ENCODE measurements at regions of chr12 and their contacts with region 1.

Region 1: GRCh38 chr12:46124848-46125619 is 134.7 kb upstream of the SCAF11 start:
- DNase-seq: peak; percentile 35 to 78 (median 50)
- ATAC-seq: peak; percentile 95
- H3K4me3 ChIP-seq: no peak overlapping the region
- H3K27ac ChIP-seq: no peak overlapping the region
- H3K4me1 ChIP-seq: peaks cover 0 to 10% of the 10 kb centered on the region in 2 experiments; a peak in 3 of 5 replicates
- H3K27me3 ChIP-seq: no peaks in the 10 kb centered on the region; a peak in 1 of 5 replicates
- CTCF ChIP-seq: peak; percentile 60 to 83 (median 65)
- EP300 ChIP-seq: no peak
- POLR2A ChIP-seq: no peak
- RAD21 ChIP-seq: peak; percentile 76 to 83

Region 2: DNA sequence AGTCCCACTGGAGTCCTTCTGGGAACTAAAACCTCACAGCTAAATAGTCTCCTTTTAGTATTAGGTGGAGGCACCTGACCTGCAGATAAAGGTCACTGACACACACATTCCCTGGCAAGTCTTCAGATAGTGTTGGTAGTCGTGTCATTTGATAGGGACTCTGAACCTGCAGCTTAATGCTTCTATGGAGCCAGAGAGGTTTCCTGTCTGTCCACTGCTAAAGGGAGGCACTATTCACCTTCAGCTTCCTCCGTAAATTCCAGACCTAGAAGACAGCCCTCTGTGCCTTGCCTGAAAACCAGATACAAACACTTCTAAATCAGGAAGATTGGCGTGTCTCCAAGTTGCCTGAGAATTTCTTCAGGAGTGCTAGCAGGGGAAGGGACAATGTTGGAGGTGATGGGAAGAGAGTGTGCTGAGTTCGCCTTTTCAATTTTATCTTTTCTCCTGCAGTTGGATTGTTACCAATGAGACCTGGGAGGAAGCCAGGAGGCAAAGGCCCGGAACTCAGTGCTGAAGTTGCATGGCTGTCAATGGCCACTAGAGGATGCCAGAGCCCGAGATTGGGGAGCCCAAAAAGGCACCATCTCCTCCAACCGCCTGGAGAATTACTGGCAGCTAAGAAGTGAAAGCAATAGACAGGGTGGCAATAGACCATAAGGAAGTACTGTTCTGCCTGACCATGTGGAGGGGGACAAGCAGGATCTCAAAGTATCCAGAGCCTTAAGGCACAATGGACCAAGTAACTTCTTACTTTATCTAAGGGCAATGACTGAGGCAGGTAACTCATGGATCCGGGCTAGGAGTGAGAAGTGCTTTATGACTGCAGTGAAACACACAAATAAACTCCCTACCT is 53.0 kb before region 1 on chr12:
- CTCF ChIA-PET with region 1: no interaction called
- POLR2A ChIA-PET with region 1: no interaction called
- in situ Hi-C with region 1: no loop called
- intact Hi-C with region 1: loop called (anchors 2 kb)
- DNase-seq: peak; percentile 52 to 78 (median 62)
- ATAC-seq: peak; percentile 99
- H3K4me3 ChIP-seq: no peak overlapping the region
- H3K27ac ChIP-seq: no peak overlapping the region
- H3K4me1 ChIP-seq: no peaks in the 10 kb centered on the region
- H3K27me3 ChIP-seq: no peaks in the 10 kb centered on the region
- CTCF ChIP-seq: peak; percentile 94 to 97 (median 96)
- EP300 ChIP-seq: no peak
- POLR2A ChIP-seq: no peak
- RAD21 ChIP-seq: peak; percentile 91 to 92

Region 3: DNA sequence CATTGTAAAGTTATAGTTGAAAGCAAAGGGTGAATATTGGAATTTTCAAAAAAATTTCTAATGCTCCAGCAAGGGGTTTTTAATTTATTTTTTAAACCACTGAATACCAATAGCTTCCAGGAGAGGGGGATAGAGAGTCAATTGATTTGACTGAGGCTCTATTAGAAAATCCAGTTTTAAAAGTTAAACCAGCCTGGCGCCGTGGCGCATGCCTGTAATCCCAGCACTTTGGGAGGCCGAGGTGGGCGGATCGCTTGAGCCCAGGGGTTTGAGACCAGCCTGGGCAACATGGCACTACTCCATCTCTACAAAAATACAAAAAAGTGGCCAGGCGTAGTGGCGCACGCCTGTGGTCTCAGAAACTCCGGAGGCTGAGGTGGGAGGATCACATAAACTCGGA is 550.7 kb after region 1 on chr12:
- CTCF ChIA-PET with region 1: no interaction called
- POLR2A ChIA-PET with region 1: no interaction called
- in situ Hi-C with region 1: no loop called
- intact Hi-C with region 1: loop called (anchors 5 kb)
- DNase-seq: peak in 3 of 4 experiments; percentile 17 to 46 (median 26)
- ATAC-seq: peak; percentile 59
- H3K4me3 ChIP-seq: no peak overlapping the region
- H3K27ac ChIP-seq: no peak overlapping the region
- H3K4me1 ChIP-seq: no peaks in the 10 kb centered on the region; a peak in 1 of 5 replicates
- H3K27me3 ChIP-seq: no peaks in the 10 kb centered on the region
- CTCF ChIP-seq: peak; percentile 36 to 60 (median 45); a peak in 4 of 6 replicates
- EP300 ChIP-seq: no peak
- POLR2A ChIP-seq: no peak
- RAD21 ChIP-seq: peak; percentile 32 to 48

Region 4: GRCh38 chr12:46933947-46934346 is 808.9 kb after region 1 on chr12:
- CTCF ChIA-PET with region 1: no interaction called
- POLR2A ChIA-PET with region 1: no interaction called
- in situ Hi-C with region 1: no loop called
- intact Hi-C with region 1: loop called (anchors 5 kb)
- DNase-seq: peak in 1 of 4 experiments; percentile 15
- ATAC-seq: peak; percentile 66; the same call in 1 of the 3 replicates
- H3K4me3 ChIP-seq: no peak overlapping the region
- H3K27ac ChIP-seq: no peak overlapping the region
- H3K4me1 ChIP-seq: no peaks in the 10 kb centered on the region
- H3K27me3 ChIP-seq: peaks cover 0 to 3% of the 10 kb centered on the region in 2 experiments; a peak in 1 of 5 replicates
- CTCF ChIP-seq: peak; percentile 19 to 50 (median 19); a peak in 3 of 6 replicates
- EP300 ChIP-seq: no peak
- POLR2A ChIP-seq: no peak
- RAD21 ChIP-seq: peak; percentile 74 to 75

Region 5: DNA sequence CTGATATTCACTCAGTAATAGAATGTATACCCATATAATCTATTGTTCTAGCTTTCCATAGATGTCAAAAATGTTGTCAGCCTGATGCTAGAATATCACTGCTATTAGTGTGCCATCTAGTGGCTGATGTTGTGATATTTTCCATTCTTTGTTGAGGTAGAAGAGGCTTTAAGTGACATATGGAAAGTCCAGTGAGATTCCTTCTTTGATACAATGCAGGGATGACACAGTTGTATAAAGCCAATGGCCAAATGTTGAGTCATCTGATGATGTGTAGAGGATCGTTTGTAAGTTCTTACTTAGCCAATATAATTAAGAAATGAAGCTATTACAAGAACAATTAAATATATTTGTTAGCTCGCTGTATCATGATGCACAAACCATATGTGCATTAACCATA is 896.3 kb after region 1 on chr12:
- CTCF ChIA-PET with region 1: interaction called, 3 read pairs
- POLR2A ChIA-PET with region 1: no interaction called
- in situ Hi-C with region 1: loop called (anchors 25 kb)
- intact Hi-C with region 1: no loop called
- DNase-seq: peak; percentile 30 to 59 (median 34)
- ATAC-seq: peak; percentile 81
- H3K4me3 ChIP-seq: no peak overlapping the region
- H3K27ac ChIP-seq: no peak overlapping the region
- H3K4me1 ChIP-seq: no peaks in the 10 kb centered on the region
- H3K27me3 ChIP-seq: 0 out of 5 replicates have a peak, but pooled peaks cover 0 to 4% of the 10 kb centered on the region in 2 experiments
- CTCF ChIP-seq: peak; percentile 41 to 74 (median 64); a peak in 5 of 6 replicates
- EP300 ChIP-seq: no peak
- POLR2A ChIP-seq: no peak
- RAD21 ChIP-seq: peak; percentile 75 to 89

Measured in K562 (cell line).